Cardiac septum (tissue), 1 donor: ENCODE measurements at regions of chr18 and their contacts with region 1.

Region 1: DNA sequence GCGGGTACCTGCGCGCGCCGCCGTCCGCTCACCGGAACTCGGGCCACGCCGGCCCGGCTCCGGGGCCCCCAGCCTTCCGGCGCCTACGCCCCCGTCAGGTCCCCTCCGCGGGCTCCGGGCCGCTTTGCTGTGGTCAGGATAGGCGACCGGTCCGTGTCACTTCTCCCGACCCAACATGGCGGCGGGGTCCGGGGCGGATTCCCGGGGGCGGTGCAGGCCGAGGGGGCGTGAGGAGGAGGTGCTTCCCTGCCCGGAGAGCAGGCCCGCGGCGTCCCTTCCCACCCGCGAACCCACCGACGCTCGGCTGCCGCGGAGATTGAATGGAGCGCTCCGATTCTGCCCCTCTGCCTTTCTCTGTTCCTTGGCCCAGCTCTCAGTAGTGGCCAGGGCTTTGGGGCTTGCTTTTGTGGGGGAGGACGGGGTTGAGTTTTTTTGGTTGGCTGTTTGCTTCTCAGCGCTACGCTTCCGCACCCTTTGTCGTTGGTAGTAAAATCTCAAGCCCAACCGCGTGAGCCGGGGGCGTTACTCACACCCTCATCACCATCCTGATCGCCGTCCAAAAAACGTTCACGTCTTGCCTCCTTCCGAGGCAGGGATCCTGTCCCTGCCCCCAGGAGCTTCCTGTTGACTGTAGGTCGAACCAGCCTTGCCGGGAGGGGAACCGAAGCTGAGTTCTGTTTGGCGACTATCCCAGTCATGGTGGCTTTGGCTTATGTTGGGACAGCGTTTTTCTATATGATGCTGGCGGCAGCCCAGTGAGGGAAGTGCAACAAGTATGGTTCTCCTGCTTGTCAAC is 532 bp upstream of the YES1 start:
- DNase-seq: peak; percentile 86

Region 2: GRCh38 chr18:741931-742512 is 70.6 kb before region 1 on chr18:
- intact Hi-C with region 1: loop called (anchors 5 kb)
- DNase-seq: no peak

Region 3: DNA sequence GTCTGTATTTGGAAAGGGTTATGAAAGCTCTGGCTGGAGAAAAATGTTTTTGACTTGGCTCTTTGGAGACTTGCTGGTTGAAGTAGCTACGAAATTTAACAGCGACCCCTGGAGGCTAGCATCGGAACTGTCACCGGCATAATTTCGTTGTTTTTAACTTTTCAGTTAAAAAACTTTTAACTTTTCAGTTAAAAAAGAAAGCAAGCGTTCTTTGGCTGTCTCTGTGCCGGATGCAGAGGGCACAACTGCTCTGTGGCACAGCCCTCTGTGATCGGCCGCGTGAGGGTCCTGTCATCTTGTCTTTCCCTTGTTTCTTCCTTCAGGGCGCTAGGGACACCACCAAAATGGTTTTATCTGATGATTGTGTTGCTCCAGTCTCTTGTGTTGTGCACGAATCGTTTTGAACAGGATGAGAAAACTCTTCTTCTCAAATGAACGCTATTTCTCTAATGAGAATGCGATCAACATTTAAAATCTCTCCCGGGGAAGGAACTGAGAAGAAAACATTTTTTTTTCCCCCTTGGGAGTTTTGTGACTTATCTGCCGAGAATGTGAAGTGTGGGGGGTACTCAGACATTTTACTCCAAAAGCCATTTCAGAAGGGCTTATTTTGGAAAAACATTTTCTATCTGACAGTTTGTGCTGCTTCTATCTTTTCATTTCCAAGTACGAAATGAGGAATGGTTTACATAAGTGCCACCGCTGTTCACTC is 149.2 kb after region 1 on chr18:
- intact Hi-C with region 1: no loop called
- DNase-seq: no peak